CD4-positive, alpha-beta T cell (primary cell): ENCODE measurements at regions of chr10 and their contacts with region 1.

Region 1: DNA sequence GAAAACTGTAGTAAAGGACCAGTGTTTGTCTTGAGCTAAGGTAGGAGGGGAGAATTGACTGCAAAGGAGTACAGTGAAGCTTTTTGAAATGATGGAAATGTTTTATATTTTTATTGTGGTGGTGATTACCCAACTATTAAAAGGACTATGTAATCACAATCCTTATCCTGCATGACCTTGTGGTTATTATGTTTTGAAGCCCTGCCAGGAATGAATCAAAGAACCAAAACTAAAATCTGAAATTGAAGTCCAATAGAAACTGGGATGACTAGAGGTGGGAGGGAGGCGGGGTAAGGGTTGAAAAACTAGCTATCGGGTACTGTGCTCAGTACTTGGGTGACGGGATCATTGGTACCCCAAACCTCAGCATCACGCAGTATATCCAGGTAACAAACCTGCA is 8.2 kb downstream of the CCDC7 start:
- DNase-seq: no peak
- ATAC-seq: no peak
- H3K4me3 ChIP-seq: no peak overlapping the region
- H3K4me3 Mint-ChIP-seq: no peak overlapping the region
- H3K27ac ChIP-seq: no peak overlapping the region
- H3K27ac Mint-ChIP-seq: no peak overlapping the region
- H3K4me1 ChIP-seq: peaks cover 9% of the 10 kb centered on the region
- H3K4me1 Mint-ChIP-seq: peaks cover 56% of the 10 kb centered on the region
- H3K27me3 ChIP-seq: no peaks in the 10 kb centered on the region
- H3K27me3 Mint-ChIP-seq: no peaks in the 10 kb centered on the region
- CTCF ChIP-seq: no peak

Region 2: GRCh38 chr10:32489901-32490300 is 35.8 kb after region 1 on chr10:
- CTCF ChIA-PET with region 1: no interaction called
- POLR2A ChIA-PET with region 1: no interaction called
- intact Hi-C with region 1: loop called in 1 of 2 experiments (anchors 5 kb)
- DNase-seq: no peak
- ATAC-seq: no peak
- H3K4me3 ChIP-seq: no peak overlapping the region
- H3K4me3 Mint-ChIP-seq: no peak overlapping the region
- H3K27ac ChIP-seq: no peak overlapping the region
- H3K27ac Mint-ChIP-seq: no peak overlapping the region
- H3K4me1 ChIP-seq: peaks cover 10% of the 10 kb centered on the region
- H3K4me1 Mint-ChIP-seq: peaks cover 25% of the 10 kb centered on the region
- H3K27me3 ChIP-seq: no peaks in the 10 kb centered on the region
- H3K27me3 Mint-ChIP-seq: no peaks in the 10 kb centered on the region
- CTCF ChIP-seq: no peak

Region 3: DNA sequence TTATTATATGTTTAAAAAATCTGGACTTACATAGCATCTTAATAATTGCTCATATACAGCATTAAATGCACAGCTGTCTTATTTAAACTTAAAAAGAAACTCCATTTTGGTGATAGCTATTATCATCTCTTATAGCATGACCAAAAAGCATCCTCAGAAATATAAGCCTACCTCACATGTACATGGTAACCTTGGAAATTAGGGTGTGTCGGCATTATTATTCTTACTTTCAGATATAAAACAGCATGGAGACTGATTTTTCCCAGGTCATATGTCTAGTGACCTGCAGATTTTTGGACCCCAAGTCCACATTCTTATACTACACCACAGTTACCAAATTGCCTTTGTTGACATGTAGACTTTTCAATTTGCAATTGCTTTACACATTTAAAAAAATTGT is 533.0 kb after region 1 on chr10:
- CTCF ChIA-PET with region 1: no interaction called
- POLR2A ChIA-PET with region 1: no interaction called
- intact Hi-C with region 1: no loop called
- DNase-seq: no peak
- ATAC-seq: no peak
- H3K4me3 ChIP-seq: no peak overlapping the region
- H3K4me3 Mint-ChIP-seq: no peak overlapping the region
- H3K27ac ChIP-seq: no peak overlapping the region
- H3K27ac Mint-ChIP-seq: no peak overlapping the region
- H3K4me1 ChIP-seq: peaks cover 5% of the 10 kb centered on the region
- H3K4me1 Mint-ChIP-seq: peaks cover 2% of the 10 kb centered on the region
- H3K27me3 ChIP-seq: no peaks in the 10 kb centered on the region
- H3K27me3 Mint-ChIP-seq: no peaks in the 10 kb centered on the region
- CTCF ChIP-seq: no peak

Region 4: GRCh38 chr10:33025039-33025438 is 570.9 kb after region 1 on chr10:
- CTCF ChIA-PET with region 1: no interaction called
- POLR2A ChIA-PET with region 1: no interaction called
- intact Hi-C with region 1: no loop called
- DNase-seq: no peak
- ATAC-seq: no peak
- H3K4me3 ChIP-seq: no peak overlapping the region
- H3K4me3 Mint-ChIP-seq: no peak overlapping the region
- H3K27ac ChIP-seq: no peak overlapping the region
- H3K27ac Mint-ChIP-seq: no peak overlapping the region
- H3K4me1 ChIP-seq: peaks cover 41% of the 10 kb centered on the region
- H3K4me1 Mint-ChIP-seq: peaks cover 49% of the 10 kb centered on the region
- H3K27me3 ChIP-seq: no peaks in the 10 kb centered on the region
- H3K27me3 Mint-ChIP-seq: no peaks in the 10 kb centered on the region
- CTCF ChIP-seq: no peak